ENCODE measurements at regions of chr14 and their contacts with region 1.

Region 1: DNA sequence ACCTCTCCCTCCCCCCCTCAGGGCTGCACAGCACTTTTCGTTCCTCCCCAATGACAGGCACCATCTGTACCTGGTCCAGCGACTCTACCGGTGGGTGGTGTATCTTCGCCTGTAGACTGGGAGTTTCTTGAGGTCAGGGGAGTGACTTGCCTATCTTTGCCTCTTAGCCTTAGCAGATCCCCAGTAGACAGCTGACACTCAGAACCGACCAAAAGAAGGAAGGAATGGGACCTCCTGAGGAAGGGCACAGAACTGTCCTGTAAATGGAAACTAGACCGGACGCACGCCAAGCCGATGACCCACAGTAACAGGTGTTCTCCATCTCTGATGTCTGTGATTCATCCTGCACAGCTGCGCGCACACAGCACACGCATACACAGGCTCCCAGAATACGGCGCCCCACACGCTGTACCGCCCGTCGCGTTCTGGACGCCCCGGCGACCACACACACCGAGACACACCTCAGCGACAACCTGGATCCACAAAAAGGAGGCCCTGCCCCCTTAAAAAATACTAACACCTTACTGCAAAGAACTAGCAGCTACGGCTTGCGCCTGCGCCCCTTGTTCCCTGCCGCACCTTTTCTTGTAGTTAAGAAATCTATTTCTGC is 673 bp upstream of the TTC9 start:
- DNase-seq: peak; percentile 24 to 73 (median 50)
- H3K4me3 ChIP-seq: peak overlapping the region; percentile 69
- H3K4me3 Mint-ChIP-seq: peak overlapping the region; percentile 94 to 99 (median 97)
- H3K27ac ChIP-seq: peak overlapping the region; percentile 10
- H3K27ac Mint-ChIP-seq: peak overlapping the region; percentile 89 to 97 (median 96)
- H3K4me1 ChIP-seq: peaks cover 32% of the 10 kb centered on the region
- H3K4me1 Mint-ChIP-seq: peaks cover 43 to 57% (median 50%) of the 10 kb centered on the region in 3 donors
- H3K27me3 ChIP-seq: no peaks in the 10 kb centered on the region
- H3K27me3 Mint-ChIP-seq: peaks cover 0 to 3% of the 10 kb centered on the region in 2 donors

Region 2: DNA sequence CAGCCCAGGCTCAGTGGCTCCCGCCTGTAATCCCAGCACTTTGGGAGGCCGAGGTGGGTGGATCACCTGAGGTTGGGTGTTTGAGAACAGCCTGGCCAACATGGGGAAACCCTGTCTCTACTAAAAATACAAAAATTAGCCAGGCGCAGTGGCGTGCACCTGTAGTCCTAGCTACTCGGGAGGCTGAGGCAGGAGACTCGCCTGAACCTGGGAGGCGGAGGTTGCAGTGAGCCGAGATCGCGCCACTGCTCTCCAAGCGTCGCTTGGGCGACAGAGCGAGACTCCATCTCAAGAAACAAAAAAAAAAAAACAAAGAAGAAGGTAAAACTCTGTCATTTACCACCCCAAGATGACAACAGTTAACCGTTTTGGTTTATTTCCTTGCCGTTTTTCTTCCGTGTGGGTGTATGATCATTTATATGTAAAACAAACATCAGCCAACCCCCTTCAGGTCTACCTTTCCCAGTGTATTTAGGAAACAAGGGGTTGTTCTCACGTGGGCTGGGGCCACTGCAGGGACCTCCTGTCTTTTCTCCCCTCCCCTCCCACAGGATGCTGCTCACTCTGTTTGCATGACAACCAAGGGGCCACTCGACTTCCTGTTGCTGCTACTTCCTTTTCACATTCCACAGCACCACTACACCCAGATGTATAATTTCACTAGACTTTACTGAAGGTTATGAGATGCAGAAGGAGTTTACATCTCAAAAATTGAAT is 14.2 kb after region 1 on chr14:
- CTCF ChIA-PET with region 1: interaction called, 31 read pairs
- POLR2A ChIA-PET with region 1: interaction called, 42 read pairs
- DNase-seq: peak; percentile 43 to 91 (median 78)
- H3K4me3 ChIP-seq: peak overlapping the region; percentile 57
- H3K4me3 Mint-ChIP-seq: peak overlapping the region; percentile 77 to 94 (median 87)
- H3K27ac ChIP-seq: peak overlapping the region; percentile 64
- H3K27ac Mint-ChIP-seq: peak overlapping the region; percentile 95 to 99 (median 98)
- H3K4me1 ChIP-seq: peaks cover 85% of the 10 kb centered on the region
- H3K4me1 Mint-ChIP-seq: peaks cover 84 to 95% (median 93%) of the 10 kb centered on the region in 3 donors
- H3K27me3 ChIP-seq: no peaks in the 10 kb centered on the region
- H3K27me3 Mint-ChIP-seq: peaks cover 0 to 2% of the 10 kb centered on the region in 2 donors

Region 3: GRCh38 chr14:70660949-70661893 is 20.2 kb after region 1 on chr14:
- CTCF ChIA-PET with region 1: interaction called, 31 read pairs
- POLR2A ChIA-PET with region 1: interaction called, 42 read pairs
- DNase-seq: peak in 4 of 5 donors; percentile 13 to 81 (median 43)
- H3K4me3 ChIP-seq: no peak overlapping the region
- H3K4me3 Mint-ChIP-seq: peak overlapping the region; percentile 12 to 76 (median 46)
- H3K27ac ChIP-seq: no peak overlapping the region
- H3K27ac Mint-ChIP-seq: peak overlapping the region; percentile 66 to 98 (median 90)
- H3K4me1 ChIP-seq: peaks cover 82% of the 10 kb centered on the region
- H3K4me1 Mint-ChIP-seq: peaks cover 74 to 89% (median 82%) of the 10 kb centered on the region in 3 donors
- H3K27me3 ChIP-seq: no peaks in the 10 kb centered on the region
- H3K27me3 Mint-ChIP-seq: no peaks in the 10 kb centered on the region

Region 4: DNA sequence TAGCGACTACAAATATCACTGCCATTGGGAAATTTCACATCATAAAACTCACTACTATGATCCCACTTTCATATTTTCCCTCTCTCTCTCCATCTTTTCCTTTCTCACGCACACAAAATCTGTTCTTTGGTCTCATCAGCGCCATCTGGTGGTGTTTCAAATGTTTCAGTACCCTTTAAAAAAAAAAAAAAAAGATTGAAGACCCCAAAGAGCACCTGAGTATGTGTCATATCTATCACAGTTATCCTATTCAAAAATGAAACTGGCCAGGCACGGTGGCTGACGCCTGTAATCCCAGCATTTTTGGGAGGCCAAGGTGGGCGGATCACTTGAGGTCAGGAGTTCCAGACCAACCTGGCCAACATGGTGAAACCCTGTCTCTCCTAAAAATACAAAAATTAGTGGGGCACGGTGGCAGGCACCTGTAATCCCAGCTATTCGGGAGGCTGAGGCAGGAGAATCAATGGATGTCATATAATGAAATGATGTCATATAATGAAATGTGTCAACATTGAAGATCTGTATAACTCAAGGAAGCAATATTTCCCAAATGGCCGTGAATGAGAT is 73.1 kb after region 1 on chr14:
- CTCF ChIA-PET with region 1: interaction called, 11 read pairs
- POLR2A ChIA-PET with region 1: no interaction called
- DNase-seq: peak; percentile 23 to 59 (median 36)
- H3K4me3 ChIP-seq: no peak overlapping the region
- H3K4me3 Mint-ChIP-seq: no peak overlapping the region
- H3K27ac ChIP-seq: no peak overlapping the region
- H3K27ac Mint-ChIP-seq: peak overlapping the region in 1 of 8 donors; percentile 1
- H3K4me1 ChIP-seq: peaks cover 7% of the 10 kb centered on the region
- H3K4me1 Mint-ChIP-seq: peaks cover 2 to 5% (median 4%) of the 10 kb centered on the region in 3 donors
- H3K27me3 ChIP-seq: no peaks in the 10 kb centered on the region
- H3K27me3 Mint-ChIP-seq: peaks cover 0 to 8% of the 10 kb centered on the region in 2 donors

Region 5: GRCh38 chr14:70816525-70816924 is 175.5 kb after region 1 on chr14:
- CTCF ChIA-PET with region 1: interaction called, 14 read pairs
- POLR2A ChIA-PET with region 1: no interaction called
- DNase-seq: no peak
- H3K4me3 ChIP-seq: no peak overlapping the region
- H3K4me3 Mint-ChIP-seq: no peak overlapping the region
- H3K27ac ChIP-seq: no peak overlapping the region
- H3K27ac Mint-ChIP-seq: no peak overlapping the region
- H3K4me1 ChIP-seq: peaks cover 16% of the 10 kb centered on the region
- H3K4me1 Mint-ChIP-seq: peaks cover 7 to 11% (median 8%) of the 10 kb centered on the region in 3 donors
- H3K27me3 ChIP-seq: peaks cover 6% of the 10 kb centered on the region
- H3K27me3 Mint-ChIP-seq: no peaks in the 10 kb centered on the region

Measured in CD8-positive, alpha-beta memory T cell (primary cell).